Tibial artery (tissue), 4 donors: ENCODE measurements at regions of chr11 and their contacts with region 1.

Region 1: GRCh38 chr11:75388386-75389275 is 10.7 kb upstream of the RPS3 start:
- DNase-seq: peak; percentile 60 to 78
- H3K4me3 ChIP-seq: no peak overlapping the region
- H3K27ac ChIP-seq: no peak overlapping the region
- H3K4me1 ChIP-seq: peaks cover 0 to 8% (median 0%) of the 10 kb centered on the region in 4 donors
- H3K27me3 ChIP-seq: peaks cover 0 to 17% of the 10 kb centered on the region in 2 donors
- CTCF ChIP-seq: peak; percentile 81 to 83

Region 2: DNA sequence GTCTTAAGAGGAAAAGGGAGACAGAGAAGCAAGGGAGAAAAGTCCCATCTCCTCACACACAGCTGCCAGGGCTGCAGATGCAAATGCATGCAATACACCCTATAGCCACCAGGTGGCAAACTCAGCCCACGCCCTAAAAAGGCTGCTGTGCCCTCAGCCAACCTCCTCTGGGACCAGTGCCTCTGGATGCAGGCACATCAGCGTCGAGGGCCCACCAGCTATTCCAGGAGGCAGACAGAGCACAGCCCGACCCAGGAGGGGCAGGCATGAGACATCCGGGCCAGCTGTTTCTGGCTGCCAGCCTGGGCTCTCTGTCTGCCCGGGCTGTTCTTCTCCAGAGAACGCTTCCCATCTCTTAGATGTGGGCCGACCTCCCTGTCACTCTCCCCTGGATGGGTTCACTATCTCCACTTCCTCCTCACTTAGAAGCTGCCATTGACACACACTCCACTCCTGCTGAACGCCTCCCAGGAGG is 108.4 kb before region 1 on chr11:
- intact Hi-C with region 1: loop called (anchors 1 kb)
- DNase-seq: peak; percentile 71 to 84
- H3K4me3 ChIP-seq: no peak overlapping the region
- H3K27ac ChIP-seq: no peak overlapping the region
- H3K4me1 ChIP-seq: peaks cover 0 to 4% (median 0%) of the 10 kb centered on the region in 4 donors
- H3K27me3 ChIP-seq: no peaks in the 10 kb centered on the region
- CTCF ChIP-seq: peak; percentile 90 to 96

Region 3: GRCh38 chr11:75328426-75329277 is 60.0 kb before region 1 on chr11:
- intact Hi-C with region 1: loop called (anchors 10 kb)
- DNase-seq: peak; percentile 74 to 82
- H3K4me3 ChIP-seq: no peak overlapping the region
- H3K27ac ChIP-seq: no peak overlapping the region
- H3K4me1 ChIP-seq: peaks cover 0 to 17% (median 5%) of the 10 kb centered on the region in 4 donors
- H3K27me3 ChIP-seq: no peaks in the 10 kb centered on the region
- CTCF ChIP-seq: peak; percentile 41 to 50

Region 4: GRCh38 chr11:75531325-75531724 is 142.7 kb after region 1 on chr11:
- intact Hi-C with region 1: loop called (anchors 2 kb)
- DNase-seq: no peak
- H3K4me3 ChIP-seq: no peak overlapping the region
- H3K27ac ChIP-seq: no peak overlapping the region
- H3K4me1 ChIP-seq: peaks cover 0 to 6% (median 1%) of the 10 kb centered on the region in 4 donors
- H3K27me3 ChIP-seq: no peaks in the 10 kb centered on the region
- CTCF ChIP-seq: no peak